Sciatic nerve (tissue), 2 donors: ENCODE measurements at regions of chr20 and their contacts with region 1.

Region 1: GRCh38 chr20:3323398-3323797 is 84.1 kb downstream of the DNAAF9 start:
- DNase-seq: no peak
- ATAC-seq: peak; percentile 10

Region 2: DNA sequence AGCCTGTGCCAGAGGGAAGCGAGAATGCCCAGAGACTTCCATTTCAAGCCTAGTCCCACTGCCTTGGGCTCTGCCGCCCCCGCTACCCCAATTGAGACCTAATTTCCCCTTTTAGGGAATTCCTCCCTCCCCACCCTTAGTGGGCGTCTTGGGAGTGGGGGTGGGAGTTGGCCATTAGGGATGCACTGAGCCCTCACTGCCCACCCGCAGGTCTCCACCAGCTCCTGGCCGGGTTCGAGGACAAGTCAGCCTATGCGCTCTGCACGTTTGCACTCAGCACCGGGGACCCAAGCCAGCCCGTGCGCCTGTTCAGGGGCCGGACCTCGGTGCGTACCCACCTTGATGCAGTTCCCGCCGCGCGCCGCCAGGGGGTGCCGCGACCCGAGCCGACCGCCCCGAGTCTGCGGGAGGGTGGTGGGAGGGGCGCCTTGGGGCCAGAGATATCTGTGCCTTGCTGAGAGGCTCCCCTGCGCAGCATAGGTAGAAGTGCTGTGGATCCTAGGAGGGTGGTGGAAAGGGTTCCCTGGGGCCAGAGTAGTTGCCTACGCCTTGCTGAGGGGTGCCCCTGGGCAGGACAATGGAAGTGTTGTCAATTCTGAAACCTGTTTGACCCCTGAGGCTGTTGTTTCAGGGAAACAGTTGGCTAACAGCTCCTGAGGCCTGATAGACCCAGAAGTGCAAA is 105.0 kb before region 1 on chr20:
- intact Hi-C with region 1: loop called (anchors 10 kb)
- DNase-seq: peak; percentile 73
- ATAC-seq: peak; percentile 76